ENCODE measurements at regions of chr1 and their contacts with region 1.

Region 1: GRCh38 chr1:39268112-39268581 is 63.7 kb downstream of the MACF1 start:
- DNase-seq: peak; percentile 61
- H3K4me3 ChIP-seq: peak overlapping the region; percentile 17 to 20
- H3K27ac ChIP-seq: peak overlapping the region; percentile 71 to 84
- H3K4me1 ChIP-seq: peaks cover 9% of the 10 kb centered on the region
- H3K27me3 ChIP-seq: no peaks in the 10 kb centered on the region
- CTCF ChIP-seq: no peak
- POLR2A ChIP-seq: peak; percentile 47

Region 2: GRCh38 chr1:39408641-39409054 is 140.5 kb after region 1 on chr1:
- intact Hi-C with region 1: loop called (anchors 5 kb)
- DNase-seq: peak; percentile 94
- H3K4me3 ChIP-seq: peak overlapping the region; percentile 71 to 79
- H3K27ac ChIP-seq: peak overlapping the region; percentile 90 to 93
- H3K4me1 ChIP-seq: peaks cover 19% of the 10 kb centered on the region
- H3K27me3 ChIP-seq: no peaks in the 10 kb centered on the region
- CTCF ChIP-seq: no peak
- POLR2A ChIP-seq: no peak

Region 3: GRCh38 chr1:39538588-39539465 is 270.7 kb after region 1 on chr1:
- intact Hi-C with region 1: loop called (anchors 10 kb)
- DNase-seq: peak; percentile 68
- H3K4me3 ChIP-seq: no peak overlapping the region
- H3K27ac ChIP-seq: no peak overlapping the region
- H3K4me1 ChIP-seq: no peaks in the 10 kb centered on the region
- H3K27me3 ChIP-seq: no peaks in the 10 kb centered on the region
- CTCF ChIP-seq: peak; percentile 75 to 94 (median 88)
- POLR2A ChIP-seq: no peak